CD4-positive, alpha-beta T cell (primary cell): ENCODE measurements at regions of chr5 and their contacts with region 1.

Region 1: GRCh38 chr5:177351385-177352329 is at the start of gene LMAN2:
- DNase-seq: peak; percentile 83 to 96 (median 86)
- ATAC-seq: peak; percentile 99
- H3K4me3 ChIP-seq: peak within 1 kb of the TSS; percentile 95
- H3K4me3 Mint-ChIP-seq: peak within 1 kb of the TSS; percentile 95
- H3K27ac ChIP-seq: peak within 1 kb of the TSS; percentile 85 to 95
- H3K27ac Mint-ChIP-seq: peak within 1 kb of the TSS; percentile 98
- H3K4me1 ChIP-seq: peaks cover 63% of the 10 kb centered on the region
- H3K4me1 Mint-ChIP-seq: peaks cover 71% of the 10 kb centered on the region
- H3K27me3 ChIP-seq: no peaks in the 10 kb centered on the region
- H3K27me3 Mint-ChIP-seq: no peaks in the 10 kb centered on the region
- CTCF ChIP-seq: no peak
- total RNA-seq, gene LMAN2: 54.5 to 55.6 TPM

Region 2: DNA sequence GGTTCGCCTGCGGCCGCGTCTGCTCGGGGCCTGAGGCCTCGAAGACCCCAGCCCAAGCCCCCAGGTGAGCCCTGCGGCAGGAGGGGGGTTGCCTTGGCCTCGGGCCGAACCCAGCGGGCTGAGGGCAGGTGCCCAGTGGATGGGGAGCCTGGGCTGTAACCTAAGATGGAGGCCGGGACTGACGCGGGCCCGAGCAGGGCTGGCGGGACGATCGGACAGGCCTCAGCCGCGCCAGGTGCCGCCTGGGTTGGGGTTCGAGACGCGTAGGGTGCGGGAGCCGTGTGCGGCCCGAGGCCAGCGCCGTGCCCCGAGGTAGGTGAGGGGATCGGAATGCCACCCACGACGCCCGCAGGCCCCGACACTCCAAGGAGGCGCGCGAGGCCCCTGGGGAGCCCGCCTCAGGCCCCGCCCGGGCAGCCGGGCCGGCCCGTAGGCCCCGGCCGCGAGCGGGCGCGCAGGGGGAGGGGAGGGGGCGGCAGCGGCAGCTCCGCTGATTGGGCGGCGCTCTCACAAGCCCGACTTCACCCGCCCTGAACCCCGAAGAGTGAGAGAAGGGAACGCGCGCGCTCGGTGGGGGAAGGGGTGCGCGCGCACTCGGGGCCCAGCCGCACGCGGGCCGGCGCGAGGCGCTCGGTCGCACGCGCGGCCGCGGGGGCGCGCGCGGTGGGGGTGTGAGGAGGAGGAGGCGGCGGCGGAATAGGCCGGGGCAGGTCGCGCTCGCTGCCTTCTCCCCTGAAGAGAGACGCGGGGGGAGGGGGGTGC is 218.4 kb before region 1 on chr5 and contains the start of gene NSD1:
- CTCF ChIA-PET with region 1: no interaction called
- POLR2A ChIA-PET with region 1: interaction called, 3 read pairs
- intact Hi-C with region 1: loop called in 1 of 2 experiments (anchors 5 kb)
- DNase-seq: peak; percentile 83 to 97 (median 90)
- ATAC-seq: peak; percentile 71
- H3K4me3 ChIP-seq: peak within 1 kb of the TSS; percentile 65
- H3K4me3 Mint-ChIP-seq: peak within 1 kb of the TSS; percentile 90
- H3K27ac ChIP-seq: peak within 1 kb of the TSS; percentile 71 to 76
- H3K27ac Mint-ChIP-seq: peak within 1 kb of the TSS; percentile 97
- H3K4me1 ChIP-seq: peaks cover 54% of the 10 kb centered on the region
- H3K4me1 Mint-ChIP-seq: peaks cover 67% of the 10 kb centered on the region
- H3K27me3 ChIP-seq: no peaks in the 10 kb centered on the region
- H3K27me3 Mint-ChIP-seq: no peaks in the 10 kb centered on the region
- CTCF ChIP-seq: no peak
- total RNA-seq, gene NSD1: 87.6 to 93.3 TPM

Region 3: GRCh38 chr5:177327539-177328522 is 23.8 kb before region 1 on chr5:
- CTCF ChIA-PET with region 1: no interaction called
- POLR2A ChIA-PET with region 1: no interaction called
- intact Hi-C with region 1: no loop called
- DNase-seq: peak in 1 of 14 experiments; percentile 60
- ATAC-seq: peak; percentile 39
- H3K4me3 ChIP-seq: no peak overlapping the region
- H3K4me3 Mint-ChIP-seq: no peak overlapping the region
- H3K27ac ChIP-seq: no peak overlapping the region
- H3K27ac Mint-ChIP-seq: peak overlapping the region; percentile 2
- H3K4me1 ChIP-seq: peaks cover 7% of the 10 kb centered on the region
- H3K4me1 Mint-ChIP-seq: peaks cover 5% of the 10 kb centered on the region
- H3K27me3 ChIP-seq: no peaks in the 10 kb centered on the region
- H3K27me3 Mint-ChIP-seq: no peaks in the 10 kb centered on the region
- CTCF ChIP-seq: no peak

Region 4: GRCh38 chr5:177362610-177363507 is 11.2 kb after region 1 on chr5:
- CTCF ChIA-PET with region 1: interaction called, 3 read pairs
- POLR2A ChIA-PET with region 1: interaction called, 15 read pairs
- intact Hi-C with region 1: no loop called
- DNase-seq: peak in 13 of 14 experiments; percentile 47 to 93 (median 63)
- ATAC-seq: peak; percentile 72
- H3K4me3 ChIP-seq: peak overlapping the region; percentile 61
- H3K4me3 Mint-ChIP-seq: peak overlapping the region; percentile 90
- H3K27ac ChIP-seq: peak overlapping the region; percentile 72 to 82
- H3K27ac Mint-ChIP-seq: peak overlapping the region; percentile 76
- H3K4me1 ChIP-seq: peaks cover 84% of the 10 kb centered on the region
- H3K4me1 Mint-ChIP-seq: peaks cover 63% of the 10 kb centered on the region
- H3K27me3 ChIP-seq: no peaks in the 10 kb centered on the region
- H3K27me3 Mint-ChIP-seq: no peaks in the 10 kb centered on the region
- CTCF ChIP-seq: no peak

Region 5: DNA sequence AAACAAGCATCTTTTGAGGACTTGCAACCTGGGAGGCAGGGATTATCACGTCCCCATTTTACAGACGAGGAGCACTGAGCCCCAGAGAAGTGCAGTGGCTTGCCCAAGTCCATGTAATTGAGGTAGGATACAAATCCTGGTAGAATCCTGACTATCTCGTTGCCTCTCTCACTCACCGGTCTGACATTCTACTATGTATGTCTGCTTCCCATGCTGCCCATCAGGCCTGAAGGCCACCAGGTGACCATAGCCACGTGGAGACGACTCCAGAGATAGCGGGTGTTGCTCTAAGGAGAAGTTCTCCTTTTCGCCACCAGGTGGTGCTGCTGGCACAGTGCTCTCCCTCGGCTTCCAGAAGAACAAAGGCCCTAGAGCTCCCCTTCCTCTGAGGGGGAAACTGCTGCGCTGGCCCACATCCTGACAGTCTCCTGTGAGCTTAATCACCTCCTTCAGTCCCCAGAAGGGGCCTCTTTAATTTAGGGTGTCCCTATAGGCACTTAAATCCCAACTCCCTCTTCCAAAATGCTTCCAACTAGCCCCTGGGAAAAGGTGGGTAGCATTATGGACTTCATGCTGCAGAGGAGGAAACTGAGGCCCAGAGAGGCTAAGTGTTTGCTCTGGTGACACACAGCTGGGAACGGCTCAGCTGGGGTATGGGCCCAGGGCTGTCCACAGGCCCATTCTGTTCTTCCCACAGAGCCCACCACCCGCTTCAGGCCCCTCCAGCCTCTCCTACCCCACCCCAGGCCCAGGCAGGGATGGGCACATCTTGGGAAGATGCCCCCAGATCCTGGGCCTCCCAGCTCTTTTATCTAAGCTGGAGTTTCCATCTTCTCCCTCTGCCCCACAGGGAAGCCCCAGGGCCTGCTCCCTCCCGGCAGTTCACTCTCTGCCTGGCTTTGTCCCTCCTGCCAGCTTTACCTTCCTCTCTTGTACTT is 39.0 kb after region 1 on chr5:
- CTCF ChIA-PET with region 1: interaction called, 6 read pairs
- POLR2A ChIA-PET with region 1: interaction called, 10 read pairs
- intact Hi-C with region 1: no loop called
- DNase-seq: peak; percentile 80 to 94 (median 84)
- ATAC-seq: peak; percentile 76
- H3K4me3 ChIP-seq: no peak overlapping the region
- H3K4me3 Mint-ChIP-seq: peak overlapping the region; percentile 52
- H3K27ac ChIP-seq: peak overlapping the region; percentile 29 to 72
- H3K27ac Mint-ChIP-seq: peak overlapping the region; percentile 80
- H3K4me1 ChIP-seq: peaks cover 59% of the 10 kb centered on the region
- H3K4me1 Mint-ChIP-seq: peaks cover 35% of the 10 kb centered on the region
- H3K27me3 ChIP-seq: no peaks in the 10 kb centered on the region
- H3K27me3 Mint-ChIP-seq: no peaks in the 10 kb centered on the region
- CTCF ChIP-seq: peak; percentile 95

Region 6: DNA sequence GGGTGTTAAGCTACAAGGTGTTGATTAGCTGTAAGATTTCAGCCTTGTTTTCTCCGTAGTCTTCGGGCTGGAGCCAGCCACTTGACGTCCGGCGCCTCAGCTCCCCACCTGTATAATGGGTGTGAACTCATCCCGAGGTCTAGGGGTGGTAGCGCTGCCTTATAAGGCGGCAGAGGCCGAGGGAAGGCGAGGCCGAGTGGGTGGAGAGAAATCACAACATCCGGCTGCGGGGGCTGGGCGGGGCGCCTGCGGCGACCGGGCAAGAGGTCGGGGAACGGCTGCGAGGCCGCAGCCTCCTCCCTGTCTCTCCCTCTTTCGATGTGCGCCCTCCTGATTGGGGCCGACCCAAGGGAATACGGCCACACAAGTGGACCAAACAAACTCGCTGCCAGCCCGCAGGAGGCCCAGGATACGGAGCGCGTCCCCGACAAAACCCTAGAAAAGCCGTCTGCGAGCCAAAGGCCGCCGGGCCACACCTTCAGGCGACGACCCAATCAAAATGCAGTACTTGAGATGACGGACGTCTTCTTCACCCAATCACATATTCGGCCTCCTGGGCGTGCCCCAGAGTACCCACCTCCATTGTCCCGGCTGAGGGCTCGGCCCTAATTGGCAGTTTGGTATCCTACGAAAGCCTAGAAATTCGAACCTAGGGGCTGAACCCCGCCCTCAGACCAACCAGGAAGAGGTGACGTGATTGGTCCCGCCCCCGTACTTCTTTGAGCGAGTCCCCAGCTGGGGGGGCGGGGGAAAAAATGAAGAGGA is 74.3 kb after region 1 on chr5:
- CTCF ChIA-PET with region 1: no interaction called
- POLR2A ChIA-PET with region 1: interaction called, 12 read pairs
- intact Hi-C with region 1: no loop called
- DNase-seq: peak; percentile 98 to 100 (median 100)
- ATAC-seq: peak; percentile 79
- H3K4me3 ChIP-seq: peak overlapping the region; percentile 52
- H3K4me3 Mint-ChIP-seq: peak overlapping the region; percentile 97
- H3K27ac ChIP-seq: peak overlapping the region; percentile 77 to 83
- H3K27ac Mint-ChIP-seq: peak overlapping the region; percentile 96
- H3K4me1 ChIP-seq: peaks cover 63% of the 10 kb centered on the region
- H3K4me1 Mint-ChIP-seq: peaks cover 42% of the 10 kb centered on the region
- H3K27me3 ChIP-seq: no peaks in the 10 kb centered on the region
- H3K27me3 Mint-ChIP-seq: no peaks in the 10 kb centered on the region
- CTCF ChIP-seq: no peak

Region 7: GRCh38 chr5:177599731-177600507 is 248.3 kb after region 1 on chr5 and contains the start of gene B4GALT7:
- CTCF ChIA-PET with region 1: no interaction called
- POLR2A ChIA-PET with region 1: no interaction called
- intact Hi-C with region 1: loop called in 1 of 2 experiments (anchors 1 kb)
- DNase-seq: peak; percentile 59 to 93 (median 85)
- ATAC-seq: peak; percentile 89
- H3K4me3 ChIP-seq: peak within 1 kb of the TSS; percentile 96
- H3K4me3 Mint-ChIP-seq: peak within 1 kb of the TSS; percentile 97
- H3K27ac ChIP-seq: peak within 1 kb of the TSS; percentile 56 to 73
- H3K27ac Mint-ChIP-seq: peak within 1 kb of the TSS; percentile 85
- H3K4me1 ChIP-seq: peaks cover 27% of the 10 kb centered on the region
- H3K4me1 Mint-ChIP-seq: peaks cover 31% of the 10 kb centered on the region
- H3K27me3 ChIP-seq: no peaks in the 10 kb centered on the region
- H3K27me3 Mint-ChIP-seq: no peaks in the 10 kb centered on the region
- CTCF ChIP-seq: no peak
- total RNA-seq, gene B4GALT7: 31.1 to 33.8 TPM